Heart left ventricle (tissue), 16 donors: ENCODE measurements at regions of chr3 and their contacts with region 1.

Region 1: GRCh38 chr3:42701142-42702065 is 1.2 kb downstream of the HHATL start:
- DNase-seq: peak; percentile 85 to 90 (median 86)
- ATAC-seq: peak; percentile 75 to 81 (median 80)
- H3K4me3 ChIP-seq: peak overlapping the region; percentile 23 to 67 (median 54)
- H3K27ac ChIP-seq: peak overlapping the region; percentile 85 to 99 (median 96)
- H3K4me1 ChIP-seq: peaks cover 0 to 61% (median 6%) of the 10 kb centered on the region in 12 donors
- H3K27me3 ChIP-seq: no peaks in the 10 kb centered on the region
- CTCF ChIP-seq: peak in 2 of 12 donors; percentile 24 to 28
- POLR2A ChIP-seq: peak; percentile 1 to 79

Region 2: GRCh38 chr3:42660893-42661292 is 40.5 kb before region 1 on chr3:
- intact Hi-C with region 1: loop called in 4 of 10 experiments (anchors 2 to 5 kb)
- DNase-seq: peak in 3 of 5 donors; percentile 43 to 64 (median 52)
- ATAC-seq: peak in 3 of 4 donors; percentile 32 to 58 (median 36)
- H3K4me3 ChIP-seq: no peak overlapping the region
- H3K27ac ChIP-seq: peak overlapping the region in 9 of 12 donors; percentile 19 to 98 (median 61)
- H3K4me1 ChIP-seq: peaks cover 0 to 63% (median 24%) of the 10 kb centered on the region in 12 donors
- H3K27me3 ChIP-seq: no peaks in the 10 kb centered on the region
- CTCF ChIP-seq: peak in 3 of 12 donors; percentile 18 to 43 (median 32)
- POLR2A ChIP-seq: no peak

Region 3: GRCh38 chr3:42721690-42722089 is 20.3 kb after region 1 on chr3:
- intact Hi-C with region 1: loop called in 1 of 10 experiments (anchors 2 kb)
- DNase-seq: peak in 2 of 5 donors; percentile 22 to 23
- ATAC-seq: peak in 2 of 4 donors; percentile 68 to 75
- H3K4me3 ChIP-seq: no peak overlapping the region
- H3K27ac ChIP-seq: peak overlapping the region in 11 of 12 donors; percentile 21 to 79 (median 50)
- H3K4me1 ChIP-seq: peaks cover 0 to 30% (median 2%) of the 10 kb centered on the region in 12 donors
- H3K27me3 ChIP-seq: peaks cover 0 to 2% (median 0%) of the 10 kb centered on the region in 9 donors
- CTCF ChIP-seq: no peak
- POLR2A ChIP-seq: no peak

Region 4: GRCh38 chr3:42755681-42756578 is 54.5 kb after region 1 on chr3:
- intact Hi-C with region 1: no loop called
- DNase-seq: no peak
- ATAC-seq: peak; percentile 32 to 78 (median 55)
- H3K4me3 ChIP-seq: no peak overlapping the region
- H3K27ac ChIP-seq: no peak overlapping the region
- H3K4me1 ChIP-seq: peaks cover 0 to 10% (median 0%) of the 10 kb centered on the region in 12 donors
- H3K27me3 ChIP-seq: no peaks in the 10 kb centered on the region
- CTCF ChIP-seq: peak in 11 of 12 donors; percentile 11 to 58 (median 36)
- POLR2A ChIP-seq: no peak